A549 (cell line): ENCODE measurements at regions of chr12 and their contacts with region 1.

Region 1: GRCh38 chr12:55926738-55927587 is 731 bp downstream of the PYM1 start:
- DNase-seq: peak; percentile 97
- ATAC-seq: peak; percentile 80 to 86
- H3K4me3 ChIP-seq: peak overlapping the region; percentile 89
- H3K27ac ChIP-seq: peak overlapping the region; percentile 94 to 96
- H3K4me1 ChIP-seq: peaks cover 33% of the 10 kb centered on the region
- CTCF ChIP-seq: peak; percentile 94
- EP300 ChIP-seq: no peak; a peak in 1 of 5 replicates
- POLR2A ChIP-seq: peak; percentile 62
- RAD21 ChIP-seq: peak; percentile 14 to 43; a peak in 2 of 5 replicates

Region 2: GRCh38 chr12:55829967-55830600 is 96.9 kb before region 1 on chr12:
- CTCF ChIA-PET with region 1: interaction called, 36 read pairs
- POLR2A ChIA-PET with region 1: interaction called, 10 read pairs
- DNase-seq: peak; percentile 23 to 28
- ATAC-seq: peak; percentile 65 to 74
- H3K4me3 ChIP-seq: peak overlapping the region; percentile 80
- H3K27ac ChIP-seq: peak overlapping the region; percentile 89 to 91
- H3K4me1 ChIP-seq: peaks cover 28% of the 10 kb centered on the region; the same call in 2 of the 3 replicates
- CTCF ChIP-seq: no peak
- EP300 ChIP-seq: no peak
- POLR2A ChIP-seq: peak; percentile 22; the same call in 1 of the 2 replicates
- RAD21 ChIP-seq: no peak; a peak in 1 of 5 replicates

Region 3: DNA sequence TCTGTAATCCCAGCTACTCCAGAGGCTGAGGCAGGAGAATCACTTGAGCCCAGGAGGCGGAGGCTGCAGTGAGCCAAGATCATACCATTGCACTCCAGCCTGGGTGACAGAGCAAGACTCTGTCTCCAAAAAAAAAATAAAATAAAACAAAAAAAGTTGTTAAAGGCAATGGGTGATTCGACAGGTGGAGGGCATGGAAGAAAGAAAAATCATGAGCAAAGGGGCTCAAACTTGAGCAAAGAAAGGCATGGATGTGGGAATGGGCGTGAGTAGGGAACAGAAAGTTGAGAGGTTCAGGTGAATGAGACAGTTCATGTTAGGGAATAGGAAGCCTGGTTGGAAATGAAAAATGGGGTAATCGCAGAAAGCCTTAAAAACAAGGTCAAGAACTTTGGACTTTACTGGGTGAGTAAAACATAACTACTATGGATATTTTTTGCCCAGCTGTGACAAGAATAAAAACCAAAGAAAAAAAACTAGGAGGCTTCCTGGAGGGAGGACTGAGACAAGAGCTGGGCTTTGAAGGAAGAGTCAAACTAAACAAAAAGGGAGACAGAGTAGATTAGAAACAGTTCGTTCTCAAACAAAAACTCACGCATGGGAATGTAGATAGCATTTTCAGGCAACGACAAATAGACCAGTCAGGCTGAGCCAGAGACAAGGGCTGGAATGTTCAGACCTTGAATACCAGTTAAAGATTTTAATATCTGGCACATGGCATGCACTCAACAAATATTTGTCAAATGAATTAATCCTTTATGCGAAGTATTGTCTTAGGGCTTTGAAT is 18.0 kb before region 1 on chr12:
- CTCF ChIA-PET with region 1: interaction called, 52 read pairs
- POLR2A ChIA-PET with region 1: no interaction called
- DNase-seq: no peak
- ATAC-seq: peak in 1 of 2 experiments; percentile 80; a peak in 3 of 6 replicates
- H3K4me3 ChIP-seq: no peak overlapping the region
- H3K27ac ChIP-seq: peak overlapping the region; percentile 36 to 49; a peak in 3 of 6 replicates
- H3K4me1 ChIP-seq: peaks cover 22% of the 10 kb centered on the region; the same call in 2 of the 3 replicates
- CTCF ChIP-seq: no peak
- EP300 ChIP-seq: no peak
- POLR2A ChIP-seq: no peak
- RAD21 ChIP-seq: no peak

Region 4: GRCh38 chr12:55915482-55915859 is 11.5 kb before region 1 on chr12:
- CTCF ChIA-PET with region 1: interaction called, 52 read pairs
- POLR2A ChIA-PET with region 1: no interaction called
- DNase-seq: no peak
- ATAC-seq: no peak
- H3K4me3 ChIP-seq: no peak overlapping the region
- H3K27ac ChIP-seq: no peak overlapping the region
- H3K4me1 ChIP-seq: peaks cover 28% of the 10 kb centered on the region
- CTCF ChIP-seq: no peak
- EP300 ChIP-seq: no peak
- POLR2A ChIP-seq: no peak
- RAD21 ChIP-seq: no peak